ENCODE measurements at regions of chr12 and their contacts with region 1.

Region 1: GRCh38 chr12:98572010-98572409 is 21.5 kb upstream of the SLC25A3 start:
- DNase-seq: no peak
- ATAC-seq: 0 out of 2 replicates have a peak, but pooled peaks have one; percentile 59
- H3K4me3 ChIP-seq: no peak overlapping the region
- H3K27ac ChIP-seq: no peak overlapping the region
- H3K4me1 ChIP-seq: no peaks in the 10 kb centered on the region
- H3K27me3 ChIP-seq: no peaks in the 10 kb centered on the region
- CTCF ChIP-seq: peak; percentile 71

Region 2: GRCh38 chr12:98456576-98457573 is 115.1 kb before region 1 on chr12:
- CTCF ChIA-PET with region 1: no interaction called
- POLR2A ChIA-PET with region 1: no interaction called
- in situ Hi-C with region 1: no loop called
- intact Hi-C with region 1: no loop called
- DNase-seq: no peak
- ATAC-seq: peak; percentile 94
- H3K4me3 ChIP-seq: peak overlapping the region; percentile 43 to 55
- H3K27ac ChIP-seq: peak overlapping the region; percentile 11; the same call in 1 of the 2 replicates
- H3K4me1 ChIP-seq: peaks cover 5% of the 10 kb centered on the region; the same call in 1 of the 2 replicates
- H3K27me3 ChIP-seq: no peaks in the 10 kb centered on the region
- CTCF ChIP-seq: no peak

Region 3: GRCh38 chr12:98559666-98560065 is 12.3 kb before region 1 on chr12:
- CTCF ChIA-PET with region 1: interaction called, 15 read pairs
- POLR2A ChIA-PET with region 1: interaction called, 3 read pairs
- in situ Hi-C with region 1: no loop called
- intact Hi-C with region 1: no loop called
- DNase-seq: no peak
- ATAC-seq: no peak
- H3K4me3 ChIP-seq: no peak overlapping the region
- H3K27ac ChIP-seq: no peak overlapping the region
- H3K4me1 ChIP-seq: no peaks in the 10 kb centered on the region
- H3K27me3 ChIP-seq: no peaks in the 10 kb centered on the region
- CTCF ChIP-seq: no peak

Region 4: DNA sequence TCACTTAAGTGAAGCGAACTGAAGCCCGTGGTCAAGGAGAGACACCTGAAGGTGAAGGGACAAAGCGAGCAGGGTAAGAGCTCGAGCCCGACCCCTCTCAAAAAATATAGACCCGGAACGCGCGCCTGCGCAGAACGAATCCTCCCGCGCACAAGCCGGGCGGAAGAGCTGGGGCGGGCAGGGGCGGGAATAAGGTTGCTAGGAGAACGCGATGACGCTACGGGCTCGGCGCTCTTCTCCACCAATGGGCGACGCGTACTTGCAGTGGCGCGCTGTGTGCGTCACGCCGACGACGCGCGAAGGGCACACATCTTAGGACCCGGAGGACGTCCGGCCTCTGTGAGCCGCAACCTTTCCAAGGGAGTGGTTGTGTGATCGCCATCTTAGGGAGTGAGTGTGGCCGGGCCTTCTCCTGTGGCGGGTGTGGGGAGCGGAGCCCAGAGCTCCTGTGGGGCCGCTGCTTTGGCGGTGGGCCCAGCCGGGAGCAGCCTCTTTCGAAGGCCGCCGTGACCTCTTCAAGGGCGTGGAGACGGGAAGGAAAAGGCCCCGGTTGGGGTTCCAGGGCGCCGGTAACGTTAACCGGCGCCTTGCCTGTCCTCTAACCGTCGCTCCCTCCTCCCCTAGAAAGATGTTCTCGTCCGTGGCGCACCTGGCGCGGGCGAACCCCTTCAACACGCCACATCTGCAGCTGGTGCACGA is 21.5 kb after region 1 on chr12 and contains the start of gene SLC25A3:
- CTCF ChIA-PET with region 1: interaction called, 14 read pairs
- POLR2A ChIA-PET with region 1: interaction called, 3 read pairs
- in situ Hi-C with region 1: no loop called
- intact Hi-C with region 1: no loop called
- DNase-seq: peak; percentile 81
- ATAC-seq: peak; percentile 100
- H3K4me3 ChIP-seq: peak within 1 kb of the TSS; percentile 56 to 88
- H3K27ac ChIP-seq: peak within 1 kb of the TSS; percentile 98
- H3K4me1 ChIP-seq: peaks cover 16% of the 10 kb centered on the region
- H3K27me3 ChIP-seq: no peaks in the 10 kb centered on the region
- CTCF ChIP-seq: no peak
- total RNA-seq, gene SLC25A3: 469 TPM

Region 5: DNA sequence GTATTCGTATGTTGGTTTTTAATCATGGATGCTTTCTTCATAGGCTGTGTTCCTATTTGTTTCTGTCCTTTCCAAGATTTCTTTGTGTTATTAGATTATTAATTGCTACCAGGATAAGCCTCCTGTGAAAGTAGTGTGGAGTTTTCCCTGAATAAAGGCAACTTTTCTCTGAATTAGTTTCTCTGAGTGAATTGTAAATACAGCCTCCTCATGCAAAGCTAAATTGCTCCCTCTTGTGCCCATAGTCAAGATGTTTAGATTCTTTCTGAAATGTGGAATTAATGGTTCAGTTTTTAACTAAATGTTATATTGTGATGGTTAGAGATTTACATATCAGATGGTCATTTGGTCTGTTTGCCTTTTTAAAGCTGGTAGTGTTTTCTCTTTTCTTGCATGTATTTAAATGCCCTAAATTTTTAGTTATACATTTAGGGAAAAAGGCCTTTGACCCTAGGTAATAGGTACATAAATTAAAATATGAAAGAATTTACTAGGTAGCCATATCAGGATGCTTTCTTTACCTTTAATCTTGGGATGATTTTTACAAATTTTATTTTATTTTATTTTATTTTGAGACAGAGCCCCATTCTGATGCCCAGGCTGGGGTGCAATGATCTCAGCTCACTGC is 82.0 kb after region 1 on chr12:
- CTCF ChIA-PET with region 1: interaction called, 4 read pairs
- POLR2A ChIA-PET with region 1: no interaction called
- in situ Hi-C with region 1: no loop called
- intact Hi-C with region 1: loop called (anchors 5 kb)
- DNase-seq: no peak
- ATAC-seq: peak; percentile 69
- H3K4me3 ChIP-seq: no peak overlapping the region
- H3K27ac ChIP-seq: no peak overlapping the region
- H3K4me1 ChIP-seq: no peaks in the 10 kb centered on the region
- H3K27me3 ChIP-seq: no peaks in the 10 kb centered on the region
- CTCF ChIP-seq: peak; percentile 63; the same call in 1 of the 2 replicates

Region 6: DNA sequence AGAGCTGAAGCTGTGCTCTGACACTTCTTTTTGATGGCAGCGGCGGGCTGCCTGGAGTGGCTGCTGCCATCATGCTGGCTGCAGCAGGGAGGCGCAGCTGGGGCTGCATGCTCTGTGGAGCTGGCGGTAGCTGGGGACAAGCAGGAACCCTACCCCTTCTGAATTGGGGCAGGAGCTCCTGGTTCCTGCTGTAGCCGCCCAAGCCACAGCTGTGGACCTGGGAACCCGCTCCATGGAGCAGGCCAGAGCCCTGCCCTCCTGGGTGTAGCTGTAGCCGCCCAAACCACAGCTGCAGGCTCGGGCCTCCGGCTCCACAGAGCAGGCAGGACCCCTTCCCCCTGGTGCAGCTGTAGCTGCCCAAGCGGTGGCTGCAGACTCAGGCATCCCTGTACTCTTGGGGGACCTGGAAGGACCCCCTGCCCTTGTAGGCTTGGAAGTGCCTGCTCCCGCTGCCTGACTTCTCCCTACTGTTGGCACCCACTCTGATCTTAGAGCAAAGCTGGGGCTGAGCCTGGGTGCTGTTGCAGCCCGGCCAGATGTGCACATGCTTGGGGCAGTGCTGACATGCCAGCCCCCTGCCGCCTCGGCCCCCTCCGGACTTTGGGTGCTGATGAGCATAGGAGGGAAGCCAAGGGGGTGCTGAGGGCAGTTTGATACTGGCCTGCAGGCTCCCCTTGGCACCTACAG is 106.4 kb after region 1 on chr12:
- CTCF ChIA-PET with region 1: interaction called, 19 read pairs
- POLR2A ChIA-PET with region 1: no interaction called
- in situ Hi-C with region 1: no loop called
- intact Hi-C with region 1: no loop called
- DNase-seq: no peak
- ATAC-seq: peak; percentile 38; the same call in 1 of the 2 replicates
- H3K4me3 ChIP-seq: no peak overlapping the region
- H3K27ac ChIP-seq: no peak overlapping the region
- H3K4me1 ChIP-seq: no peaks in the 10 kb centered on the region
- H3K27me3 ChIP-seq: no peaks in the 10 kb centered on the region
- CTCF ChIP-seq: no peak

Region 7: DNA sequence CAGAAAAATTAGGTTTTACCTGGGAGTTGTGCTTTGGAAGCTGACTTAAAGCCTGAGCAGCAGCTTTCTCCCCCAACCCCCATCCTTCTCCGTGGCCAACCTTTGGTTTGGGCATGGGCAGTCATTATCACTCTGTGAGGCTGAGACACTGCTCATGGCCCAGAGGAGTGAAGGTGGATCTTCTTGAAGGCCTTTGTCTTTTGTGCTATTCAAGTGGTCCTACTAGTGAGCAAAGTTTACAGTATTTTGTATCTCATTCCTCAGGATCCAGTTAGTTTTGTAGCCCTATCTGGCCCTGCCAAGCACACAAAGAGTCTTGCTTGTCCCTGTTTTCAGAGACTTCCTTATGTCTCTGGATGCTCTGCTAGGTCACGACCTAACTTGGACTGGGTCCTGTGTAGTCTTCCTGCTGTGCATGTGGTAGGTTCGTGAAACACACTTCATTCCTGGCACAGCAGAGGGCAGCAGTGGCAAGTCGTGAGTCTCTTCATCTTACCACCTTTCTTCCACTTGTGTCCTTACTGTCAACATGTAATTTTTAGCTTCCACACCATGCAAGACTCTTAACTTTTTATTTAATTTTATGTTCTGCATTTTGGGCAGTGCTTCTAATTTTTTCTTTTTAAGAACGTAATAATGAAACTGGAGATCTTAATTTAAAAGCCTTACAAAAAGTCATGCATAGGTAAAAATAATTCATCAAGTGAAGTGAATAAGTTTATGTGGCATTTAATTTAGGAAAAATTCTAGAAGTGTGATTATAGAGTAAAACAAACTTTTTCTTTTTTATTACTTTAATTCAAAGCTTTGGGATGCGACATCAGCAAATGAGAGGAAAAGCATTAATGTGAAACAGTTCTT is 126.8 kb after region 1 on chr12:
- CTCF ChIA-PET with region 1: no interaction called
- POLR2A ChIA-PET with region 1: no interaction called
- in situ Hi-C with region 1: no loop called
- intact Hi-C with region 1: no loop called
- DNase-seq: peak; percentile 38
- ATAC-seq: peak; percentile 97
- H3K4me3 ChIP-seq: no peak overlapping the region
- H3K27ac ChIP-seq: no peak overlapping the region
- H3K4me1 ChIP-seq: 0 out of 2 replicates have a peak, but pooled peaks cover 3% of the 10 kb centered on the region
- H3K27me3 ChIP-seq: no peaks in the 10 kb centered on the region
- CTCF ChIP-seq: peak; percentile 85